ENCODE measurements at regions of chr17 and their contacts with region 1.

Region 1: DNA sequence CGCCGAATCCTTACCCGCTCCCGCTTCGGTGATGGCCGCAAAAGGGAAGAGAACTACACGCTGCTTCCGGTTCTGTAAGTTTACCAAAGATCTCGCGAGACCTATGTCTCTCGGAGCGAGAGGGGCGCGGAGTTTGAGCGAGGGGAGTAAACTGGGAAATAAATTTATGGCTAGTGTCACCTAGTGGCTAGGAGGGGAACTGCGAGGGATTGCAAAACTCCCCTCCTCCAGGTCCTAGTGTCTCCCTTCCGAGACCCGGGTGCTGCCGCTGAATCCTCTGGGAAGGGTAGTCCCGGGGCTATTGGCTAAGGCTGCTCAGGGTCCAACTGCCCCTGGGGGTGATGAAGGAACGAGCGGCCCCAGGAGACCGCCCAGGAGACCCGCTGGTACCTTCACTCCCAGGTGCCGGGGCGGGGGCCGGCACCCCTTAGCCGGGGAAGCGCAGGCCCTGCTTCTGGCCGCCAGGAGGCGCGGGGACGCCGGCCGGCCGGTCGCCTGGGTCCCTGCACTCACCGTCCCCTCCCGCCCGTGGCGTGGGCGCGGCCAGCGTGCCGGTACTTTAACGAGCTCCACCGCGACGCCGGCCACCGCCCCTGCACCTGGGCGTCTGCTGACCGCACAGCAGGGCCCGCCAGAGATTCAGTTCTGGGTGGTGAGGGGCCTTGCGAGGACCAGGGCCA is at the start of gene RPL26:
- DNase-seq: peak; percentile 97
- H3K4me3 ChIP-seq: peak within 1 kb of the TSS; percentile 86 to 99 (median 91)
- H3K27ac ChIP-seq: peak within 1 kb of the TSS; percentile 84
- H3K4me1 ChIP-seq: peaks cover 34% of the 10 kb centered on the region
- H3K27me3 ChIP-seq: no peaks in the 10 kb centered on the region
- CTCF ChIP-seq: peak; percentile 78 to 86
- total RNA-seq, gene RPL26: 1,799 to 2,054 TPM

Region 2: GRCh38 chr17:8393420-8394241 is 10.3 kb after region 1 on chr17:
- CTCF ChIA-PET with region 1: interaction called, 6 read pairs
- dilution Hi-C with region 1: no loop called
- in situ Hi-C with region 1: no loop called
- intact Hi-C with region 1: loop called (anchors 1 kb)
- DNase-seq: peak; percentile 84
- H3K4me3 ChIP-seq: no peak overlapping the region
- H3K27ac ChIP-seq: peak overlapping the region; percentile 67
- H3K4me1 ChIP-seq: peaks cover 37% of the 10 kb centered on the region
- H3K27me3 ChIP-seq: no peaks in the 10 kb centered on the region
- CTCF ChIP-seq: no peak

Region 3: DNA sequence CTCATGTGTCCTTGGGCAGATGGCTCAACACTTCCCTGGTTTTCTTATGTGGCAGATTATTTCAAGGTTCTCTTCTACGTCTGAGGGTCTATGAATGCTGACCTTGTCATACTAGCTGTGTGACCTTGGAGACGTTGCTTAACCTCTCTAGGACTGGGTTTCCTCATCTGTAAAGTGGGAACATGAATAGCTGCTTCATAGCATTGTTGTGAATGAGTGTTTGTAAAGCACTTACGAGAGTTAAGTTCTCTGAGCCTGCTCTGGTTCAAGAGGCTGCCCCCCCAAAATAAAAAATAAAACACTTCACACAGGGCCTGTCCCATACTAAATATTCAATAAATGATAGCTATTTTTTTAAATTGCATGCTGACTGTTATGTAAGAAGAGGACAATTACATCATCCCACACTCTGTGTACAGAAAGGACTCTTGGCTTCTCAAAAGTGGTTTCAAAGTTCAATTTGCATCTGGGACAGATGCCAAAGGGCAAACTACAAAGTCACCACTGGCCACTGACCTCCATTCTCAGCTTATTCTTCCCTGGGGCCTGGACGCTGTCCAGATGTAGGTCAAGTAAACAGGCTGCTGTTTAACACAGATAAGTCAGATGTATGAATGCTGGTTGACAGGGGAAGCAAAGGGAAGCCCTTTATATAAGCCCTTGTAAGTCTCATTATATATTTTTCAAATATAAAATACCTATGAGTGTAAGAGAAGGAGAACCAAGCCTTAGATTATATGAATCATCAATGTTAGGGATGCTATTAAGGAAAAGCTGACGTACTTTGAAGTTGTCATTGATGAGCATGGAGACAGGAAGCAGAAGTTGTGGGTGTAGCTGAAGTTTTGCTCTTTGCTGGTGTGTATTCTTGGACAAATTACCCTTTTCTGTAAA is 37.0 kb after region 1 on chr17:
- CTCF ChIA-PET with region 1: no interaction called
- dilution Hi-C with region 1: loop called (anchors 5 kb)
- in situ Hi-C with region 1: no loop called
- intact Hi-C with region 1: loop called (anchors 5 kb)
- DNase-seq: no peak
- H3K4me3 ChIP-seq: no peak overlapping the region
- H3K27ac ChIP-seq: no peak overlapping the region
- H3K4me1 ChIP-seq: no peaks in the 10 kb centered on the region
- H3K27me3 ChIP-seq: no peaks in the 10 kb centered on the region
- CTCF ChIP-seq: no peak

Region 4: GRCh38 chr17:8488901-8489300 is 105.6 kb after region 1 on chr17:
- CTCF ChIA-PET with region 1: no interaction called
- dilution Hi-C with region 1: no loop called
- in situ Hi-C with region 1: no loop called
- intact Hi-C with region 1: loop called (anchors 1 kb)
- DNase-seq: peak; percentile 75
- H3K4me3 ChIP-seq: no peak overlapping the region
- H3K27ac ChIP-seq: no peak overlapping the region
- H3K4me1 ChIP-seq: peaks cover 6% of the 10 kb centered on the region
- H3K27me3 ChIP-seq: no peaks in the 10 kb centered on the region
- CTCF ChIP-seq: peak in 1 of 2 donors; percentile 25

Region 5: DNA sequence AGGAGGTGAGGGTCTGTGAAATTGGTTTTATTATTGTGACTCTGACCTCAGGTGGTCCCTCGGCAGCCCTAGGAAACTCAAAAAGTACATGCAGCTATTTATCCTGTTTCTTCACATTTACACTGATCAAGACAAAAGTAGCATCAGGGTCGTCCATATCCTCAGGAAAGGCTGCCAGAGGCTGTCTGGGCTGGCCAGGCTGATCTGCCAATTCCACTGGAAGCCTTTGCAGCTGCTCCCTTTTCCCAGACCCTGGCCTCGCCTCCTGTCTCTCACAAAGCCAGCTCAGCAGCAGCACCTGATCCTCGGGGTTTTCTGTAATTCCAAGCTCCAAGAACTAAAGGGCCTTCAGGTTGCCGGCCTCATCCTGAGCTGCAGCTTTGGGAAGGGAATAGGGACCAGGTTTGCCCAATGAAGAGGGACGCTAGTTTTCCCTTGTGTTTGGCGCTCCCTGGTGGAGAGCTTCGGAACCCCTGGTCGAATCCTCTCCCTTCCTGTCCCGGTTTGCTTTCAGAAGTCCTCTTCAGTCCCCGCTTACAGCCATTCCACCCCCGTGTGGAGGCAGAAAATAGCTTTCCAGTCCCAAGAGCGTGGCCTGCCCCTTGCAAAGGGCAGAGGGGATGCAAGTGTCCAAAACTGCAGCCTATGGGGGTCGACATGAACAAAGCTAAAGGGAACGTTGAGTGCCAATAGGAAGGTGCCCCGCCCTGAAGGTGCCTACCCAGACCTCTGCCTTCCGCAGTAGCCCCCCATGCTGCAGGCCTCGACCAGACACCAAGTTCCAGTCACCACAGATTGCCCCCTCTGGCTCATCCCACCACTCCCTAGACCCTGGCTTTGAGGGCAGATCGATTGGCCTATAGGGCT is 402.5 kb after region 1 on chr17:
- CTCF ChIA-PET with region 1: interaction called, 5 read pairs
- dilution Hi-C with region 1: no loop called
- in situ Hi-C with region 1: no loop called
- intact Hi-C with region 1: loop called (anchors 1 kb)
- DNase-seq: peak; percentile 45
- H3K4me3 ChIP-seq: no peak overlapping the region
- H3K27ac ChIP-seq: no peak overlapping the region
- H3K4me1 ChIP-seq: no peaks in the 10 kb centered on the region
- H3K27me3 ChIP-seq: no peaks in the 10 kb centered on the region
- CTCF ChIP-seq: peak; percentile 83 to 89

Region 6: DNA sequence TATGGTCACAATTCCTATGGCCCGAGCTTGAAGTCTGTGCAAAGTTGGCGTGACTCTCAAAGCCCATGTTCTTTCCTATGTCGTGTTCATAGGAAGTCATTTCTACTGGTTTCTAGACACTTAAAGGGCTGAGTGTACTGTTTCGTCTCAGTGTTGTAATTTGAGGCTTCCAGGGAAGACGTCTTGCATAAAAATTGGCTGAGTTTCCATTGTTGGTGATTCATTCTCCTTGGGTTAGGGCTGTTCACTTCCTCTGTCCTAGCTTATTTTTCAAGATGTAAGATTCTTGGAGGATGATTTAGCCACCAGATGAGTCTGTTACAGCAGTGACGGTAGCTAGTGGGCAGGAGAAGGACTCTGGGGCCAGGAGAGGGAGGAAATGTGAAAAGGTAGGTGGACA is 539.2 kb after region 1 on chr17:
- CTCF ChIA-PET with region 1: no interaction called
- dilution Hi-C with region 1: no loop called
- in situ Hi-C with region 1: no loop called
- intact Hi-C with region 1: no loop called
- DNase-seq: peak; percentile 97
- H3K4me3 ChIP-seq: no peak overlapping the region
- H3K27ac ChIP-seq: peak overlapping the region; percentile 65
- H3K4me1 ChIP-seq: peaks cover 14% of the 10 kb centered on the region
- H3K27me3 ChIP-seq: no peaks in the 10 kb centered on the region
- CTCF ChIP-seq: no peak

Measured in mammary epithelial cell (primary cell).